ENCODE measurements at regions of chr5 and their contacts with region 1.

Region 1: DNA sequence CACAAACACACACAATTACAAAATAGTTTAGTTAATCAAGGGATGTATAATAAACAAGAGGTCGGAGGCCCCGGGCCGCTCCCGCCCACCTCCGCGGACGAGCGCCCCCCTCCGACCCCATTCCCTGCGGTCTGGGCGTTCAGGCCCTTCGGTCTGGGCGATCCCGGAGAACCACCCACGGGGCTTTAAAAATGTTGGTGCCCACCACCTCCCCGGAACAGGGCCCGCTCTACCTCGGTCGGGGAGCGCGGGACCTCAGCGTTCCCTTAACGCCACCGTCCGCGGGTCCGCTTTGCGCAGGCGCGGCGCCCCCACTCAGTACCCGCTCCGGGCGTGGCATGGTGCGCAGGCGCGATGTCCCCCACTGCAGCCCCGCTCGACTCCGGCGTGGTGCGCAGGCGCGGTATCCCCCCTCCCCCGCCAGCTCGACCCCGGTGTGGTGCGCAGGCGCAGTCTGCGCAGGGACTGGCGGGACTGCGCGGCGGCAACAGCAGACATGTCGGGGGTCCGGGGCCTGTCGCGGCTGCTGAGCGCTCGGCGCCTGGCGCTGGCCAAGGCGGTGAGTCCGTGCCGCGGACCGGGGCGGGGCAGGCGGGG is at the starts of genes CCDC127 and SDHA:
- DNase-seq: peak; percentile 99
- H3K4me3 Mint-ChIP-seq: peak within 1 kb of the TSS; percentile 96
- H3K27ac Mint-ChIP-seq: peak within 1 kb of the TSS; percentile 94
- H3K4me1 Mint-ChIP-seq: peaks cover 61% of the 10 kb centered on the region
- H3K27me3 Mint-ChIP-seq: no peaks in the 10 kb centered on the region
- total RNA-seq, gene CCDC127: 9.5 and 10.9 TPM in 2 replicates
- total RNA-seq, gene SDHA: 135 TPM in 2 replicates

Region 2: GRCh38 chr5:188488-189481 is 29.2 kb before region 1 on chr5:
- intact Hi-C with region 1: loop called (anchors 1 kb)
- DNase-seq: peak; percentile 83
- H3K4me3 Mint-ChIP-seq: no peak overlapping the region
- H3K27ac Mint-ChIP-seq: no peak overlapping the region
- H3K4me1 Mint-ChIP-seq: no peaks in the 10 kb centered on the region
- H3K27me3 Mint-ChIP-seq: no peaks in the 10 kb centered on the region

Region 3: GRCh38 chr5:392431-392988 is 174.6 kb after region 1 on chr5:
- intact Hi-C with region 1: loop called (anchors 2 kb)
- DNase-seq: peak; percentile 87
- H3K4me3 Mint-ChIP-seq: peak overlapping the region; percentile 74
- H3K27ac Mint-ChIP-seq: peak overlapping the region; percentile 98
- H3K4me1 Mint-ChIP-seq: peaks cover 36% of the 10 kb centered on the region
- H3K27me3 Mint-ChIP-seq: peaks cover 2% of the 10 kb centered on the region

Region 4: GRCh38 chr5:442335-443238 is 224.6 kb after region 1 on chr5 and contains the start of gene EXOC3:
- intact Hi-C with region 1: loop called (anchors 5 kb)
- DNase-seq: peak; percentile 76
- H3K4me3 Mint-ChIP-seq: peak within 1 kb of the TSS; percentile 97
- H3K27ac Mint-ChIP-seq: peak within 1 kb of the TSS; percentile 96
- H3K4me1 Mint-ChIP-seq: peaks cover 19% of the 10 kb centered on the region
- H3K27me3 Mint-ChIP-seq: peaks cover 3% of the 10 kb centered on the region
- total RNA-seq, gene EXOC3: 59.6 and 62.0 TPM in 2 replicates

Region 5: GRCh38 chr5:463952-464351 is 246.0 kb after region 1 on chr5:
- intact Hi-C with region 1: loop called (anchors 5 kb)
- DNase-seq: peak; percentile 61
- H3K4me3 Mint-ChIP-seq: peak overlapping the region; percentile 47
- H3K27ac Mint-ChIP-seq: peak overlapping the region; percentile 71
- H3K4me1 Mint-ChIP-seq: peaks cover 51% of the 10 kb centered on the region
- H3K27me3 Mint-ChIP-seq: no peaks in the 10 kb centered on the region